ENCODE measurements at regions of chr5 and their contacts with region 1.

Region 1: DNA sequence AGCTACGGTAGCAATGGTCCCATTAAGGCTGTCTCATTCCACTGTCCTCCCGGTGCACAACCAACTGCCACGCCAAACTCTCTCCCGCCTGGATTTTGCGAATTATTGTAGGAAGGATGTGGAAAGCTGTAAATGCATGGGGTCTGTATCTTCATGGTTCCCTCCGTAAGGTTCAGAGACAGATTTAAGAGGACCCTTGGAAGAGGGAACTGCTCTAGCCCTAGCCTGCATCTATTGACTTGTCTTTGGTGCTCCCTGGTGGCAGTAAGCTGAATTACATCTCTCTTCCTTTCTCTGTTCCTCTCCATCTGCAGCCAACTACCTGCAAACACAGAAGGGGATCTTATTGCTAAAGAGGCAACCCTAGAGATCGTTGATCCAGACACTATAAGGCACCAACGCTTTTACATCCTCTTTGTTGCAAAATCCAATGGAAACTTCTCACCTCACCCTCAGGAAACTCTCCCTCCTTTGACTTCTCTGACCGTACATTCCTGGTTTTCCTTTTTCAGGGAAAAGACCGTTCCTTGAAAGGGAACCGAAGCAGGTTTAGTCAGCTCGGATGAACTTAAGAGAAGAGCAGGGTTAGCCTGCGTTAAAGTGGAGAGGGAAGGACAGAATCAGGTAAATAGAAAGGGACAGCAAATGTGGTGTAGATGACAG is 11.9 kb downstream of the CAPSL start:
- DNase-seq: peak; percentile 64
- H3K4me3 Mint-ChIP-seq: no peak overlapping the region
- H3K27ac Mint-ChIP-seq: no peak overlapping the region
- H3K4me1 Mint-ChIP-seq: peaks cover 39% of the 10 kb centered on the region
- H3K27me3 Mint-ChIP-seq: peaks cover 5% of the 10 kb centered on the region

Region 2: DNA sequence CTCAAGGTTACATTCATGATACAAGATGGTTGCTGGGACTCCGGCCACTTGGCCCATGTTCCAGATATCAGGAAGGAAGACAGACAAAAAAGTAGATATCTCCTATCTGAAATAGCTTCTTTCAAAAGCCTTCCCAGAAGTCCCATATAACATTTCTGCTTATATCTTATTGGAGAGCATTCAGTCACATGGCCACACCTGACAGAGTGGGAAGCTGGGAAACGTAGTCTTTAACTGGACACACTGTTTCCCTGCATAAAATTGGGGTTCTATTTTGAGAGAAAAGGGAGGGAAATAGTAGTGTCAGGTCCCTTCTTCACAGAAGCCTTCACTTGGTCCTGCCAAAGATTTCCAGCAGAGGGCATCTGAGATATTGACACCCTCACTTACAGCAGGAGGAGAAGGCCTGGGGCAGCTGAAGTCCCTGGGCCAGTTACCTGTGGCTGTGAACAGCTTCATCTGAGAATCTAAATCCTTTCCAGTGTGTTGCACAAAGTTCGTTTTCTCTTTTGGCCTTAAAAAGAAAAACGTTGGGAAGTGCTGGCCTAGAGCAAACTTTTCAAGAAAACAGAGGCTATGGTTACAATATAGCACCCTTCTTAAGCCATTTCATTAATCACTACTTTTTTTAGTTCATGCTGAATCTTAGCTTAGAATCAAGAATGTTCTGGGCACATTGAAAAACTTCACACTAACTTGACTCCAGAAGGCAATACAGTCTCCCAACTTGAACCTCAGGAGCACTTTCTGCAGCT is 275.3 kb before region 1 on chr5:
- CTCF ChIA-PET with region 1: interaction called, 138 read pairs
- POLR2A ChIA-PET with region 1: interaction called, 7 read pairs
- DNase-seq: peak; percentile 68
- H3K4me3 Mint-ChIP-seq: no peak overlapping the region
- H3K27ac Mint-ChIP-seq: no peak overlapping the region
- H3K4me1 Mint-ChIP-seq: peaks cover 2% of the 10 kb centered on the region
- H3K27me3 Mint-ChIP-seq: no peaks in the 10 kb centered on the region

Region 3: GRCh38 chr5:35777358-35778087 is 149.0 kb before region 1 on chr5:
- CTCF ChIA-PET with region 1: interaction called, 124 read pairs
- POLR2A ChIA-PET with region 1: interaction called, 4 read pairs
- DNase-seq: peak; percentile 72
- H3K4me3 Mint-ChIP-seq: no peak overlapping the region
- H3K27ac Mint-ChIP-seq: peak overlapping the region; percentile 65
- H3K4me1 Mint-ChIP-seq: peaks cover 79% of the 10 kb centered on the region
- H3K27me3 Mint-ChIP-seq: no peaks in the 10 kb centered on the region

Region 4: DNA sequence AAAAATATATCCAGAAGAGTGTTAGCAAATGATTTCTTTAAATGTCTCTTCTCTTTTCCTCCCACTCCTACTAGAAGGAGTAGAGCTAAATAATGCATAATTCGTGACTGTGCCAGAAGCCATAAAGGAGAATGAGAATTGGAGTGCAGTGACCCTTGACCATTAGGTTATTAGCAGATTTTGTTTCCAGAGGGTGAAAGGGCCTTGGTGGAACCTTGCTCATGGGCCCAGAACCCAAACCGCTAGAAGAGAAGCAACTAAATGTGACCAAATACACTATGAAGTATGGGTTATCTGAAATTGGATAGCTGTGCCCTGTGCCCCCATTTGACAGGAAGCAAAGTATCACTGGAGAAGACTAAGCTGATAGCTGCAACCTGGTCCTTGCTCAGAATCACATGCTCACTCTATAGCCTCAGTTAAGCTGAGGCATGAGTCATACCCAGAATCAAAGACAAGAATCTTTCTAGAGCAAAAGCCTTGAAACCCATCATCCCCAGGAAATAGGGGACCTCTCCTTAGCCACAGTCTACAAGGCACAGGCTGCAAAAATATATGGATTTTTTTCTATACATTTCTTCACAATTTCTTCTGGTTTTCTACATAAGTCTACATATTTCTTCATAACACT is 24.4 kb before region 1 on chr5:
- CTCF ChIA-PET with region 1: interaction called, 14 read pairs
- POLR2A ChIA-PET with region 1: no interaction called
- DNase-seq: peak; percentile 52
- H3K4me3 Mint-ChIP-seq: peak overlapping the region; percentile 9
- H3K27ac Mint-ChIP-seq: peak overlapping the region; percentile 71
- H3K4me1 Mint-ChIP-seq: peaks cover 77% of the 10 kb centered on the region
- H3K27me3 Mint-ChIP-seq: no peaks in the 10 kb centered on the region

Measured in activated CD4-positive, alpha-beta memory T cell treated with anti-CD3 and anti-CD28 coated beads, Interleukin-2, amount 10 ng/mL, durations not matched to agents 7 days and 5 days (primary cell).